ENCODE measurements at regions of chr1 and their contacts with region 1.

Region 1: GRCh38 chr1:89855413-89856123 is 34.7 kb downstream of the LRRC8D start:
- DNase-seq: peak; percentile 73
- H3K4me3 Mint-ChIP-seq: no peak overlapping the region
- H3K27ac Mint-ChIP-seq: no peak overlapping the region
- H3K4me1 Mint-ChIP-seq: peaks cover 5% of the 10 kb centered on the region
- H3K27me3 Mint-ChIP-seq: no peaks in the 10 kb centered on the region

Region 2: GRCh38 chr1:89865498-89866385 is 10.2 kb after region 1 on chr1:
- intact Hi-C with region 1: loop called (anchors 1 kb)
- DNase-seq: no peak
- H3K4me3 Mint-ChIP-seq: no peak overlapping the region
- H3K27ac Mint-ChIP-seq: peak overlapping the region; percentile 8
- H3K4me1 Mint-ChIP-seq: peaks cover 49% of the 10 kb centered on the region
- H3K27me3 Mint-ChIP-seq: no peaks in the 10 kb centered on the region

Region 3: DNA sequence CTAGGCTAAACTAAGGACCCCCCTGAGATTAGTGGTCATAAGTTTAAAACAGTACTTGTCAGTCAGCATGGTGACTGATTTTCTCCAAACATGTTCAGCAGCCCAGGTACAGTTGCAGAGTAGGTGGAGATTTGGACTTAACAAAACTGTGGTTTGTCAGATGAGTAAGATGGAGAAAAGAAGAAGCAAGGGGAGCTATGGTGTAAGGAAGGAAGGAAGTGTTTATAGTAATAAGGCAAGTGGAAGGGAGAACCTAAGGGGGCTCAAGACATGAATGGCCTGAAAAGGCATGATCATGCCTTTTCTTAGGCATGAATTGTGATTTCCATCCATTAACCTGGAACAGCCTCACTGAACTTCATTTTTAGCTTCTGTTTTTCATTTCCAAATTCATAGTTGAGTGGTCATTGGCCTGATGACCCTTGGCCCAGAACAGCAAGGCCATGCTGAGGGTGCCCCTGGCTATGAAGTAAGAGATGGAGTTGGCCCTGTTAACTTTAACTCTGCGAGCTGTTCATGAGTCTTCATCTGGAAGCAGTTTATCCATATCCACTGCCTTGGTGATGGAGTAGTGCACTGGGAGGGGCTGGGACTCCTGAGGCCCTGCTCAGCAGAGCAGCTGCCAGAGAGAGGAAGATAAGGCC is 26.0 kb after region 1 on chr1:
- intact Hi-C with region 1: loop called (anchors 1 kb)
- DNase-seq: no peak
- H3K4me3 Mint-ChIP-seq: no peak overlapping the region
- H3K27ac Mint-ChIP-seq: no peak overlapping the region
- H3K4me1 Mint-ChIP-seq: peaks cover 11% of the 10 kb centered on the region
- H3K27me3 Mint-ChIP-seq: no peaks in the 10 kb centered on the region

Region 4: DNA sequence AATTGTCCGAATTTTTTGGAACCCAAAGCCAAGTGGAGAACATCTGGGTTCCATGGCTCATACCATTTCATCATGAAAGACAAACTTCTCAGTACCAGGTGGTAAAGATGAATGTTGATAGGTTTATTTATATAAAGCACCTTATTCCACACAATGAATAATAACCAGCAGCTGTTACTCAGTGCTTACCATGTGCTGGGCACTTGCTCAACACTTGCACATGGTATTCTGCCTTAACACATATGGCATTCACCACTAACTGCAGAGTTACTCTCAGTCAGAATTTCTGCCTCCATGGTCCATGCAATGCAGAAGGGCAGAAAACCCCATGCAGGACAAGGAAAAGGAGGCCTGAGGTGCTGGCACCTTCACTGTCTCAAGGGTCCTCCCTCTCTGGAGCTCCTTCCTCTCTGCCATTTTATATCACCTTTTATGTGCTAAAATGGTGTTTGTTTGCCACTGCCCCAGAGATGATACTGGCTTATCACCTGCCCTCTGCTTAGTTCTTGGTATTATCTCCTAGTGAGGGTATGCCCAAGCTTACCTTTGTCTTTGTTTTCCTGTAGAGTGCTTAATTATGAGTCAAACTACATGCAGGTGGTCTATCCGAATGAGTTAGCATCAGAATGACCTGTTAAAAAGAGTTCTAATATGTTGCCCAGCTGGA is 62.7 kb after region 1 on chr1:
- intact Hi-C with region 1: no loop called
- DNase-seq: no peak
- H3K4me3 Mint-ChIP-seq: no peak overlapping the region
- H3K27ac Mint-ChIP-seq: no peak overlapping the region
- H3K4me1 Mint-ChIP-seq: peaks cover 3% of the 10 kb centered on the region
- H3K27me3 Mint-ChIP-seq: no peaks in the 10 kb centered on the region